Activated CD4-positive, alpha-beta memory T cell treated with anti-CD3 and anti-CD28 coated beads, Interleukin-2, amount 10 ng/mL, durations not matched to agents 7 days and 5 days (primary cell): ENCODE measurements at regions of chr17 and their contacts with region 1.

Region 1: GRCh38 chr17:63919311-63919723 is 678 bp upstream of the GH1 start:
- DNase-seq: peak; percentile 79
- H3K4me3 Mint-ChIP-seq: no peak overlapping the region
- H3K27ac Mint-ChIP-seq: no peak overlapping the region
- H3K4me1 Mint-ChIP-seq: peaks cover 8% of the 10 kb centered on the region
- H3K27me3 Mint-ChIP-seq: peaks cover 19% of the 10 kb centered on the region

Region 2: DNA sequence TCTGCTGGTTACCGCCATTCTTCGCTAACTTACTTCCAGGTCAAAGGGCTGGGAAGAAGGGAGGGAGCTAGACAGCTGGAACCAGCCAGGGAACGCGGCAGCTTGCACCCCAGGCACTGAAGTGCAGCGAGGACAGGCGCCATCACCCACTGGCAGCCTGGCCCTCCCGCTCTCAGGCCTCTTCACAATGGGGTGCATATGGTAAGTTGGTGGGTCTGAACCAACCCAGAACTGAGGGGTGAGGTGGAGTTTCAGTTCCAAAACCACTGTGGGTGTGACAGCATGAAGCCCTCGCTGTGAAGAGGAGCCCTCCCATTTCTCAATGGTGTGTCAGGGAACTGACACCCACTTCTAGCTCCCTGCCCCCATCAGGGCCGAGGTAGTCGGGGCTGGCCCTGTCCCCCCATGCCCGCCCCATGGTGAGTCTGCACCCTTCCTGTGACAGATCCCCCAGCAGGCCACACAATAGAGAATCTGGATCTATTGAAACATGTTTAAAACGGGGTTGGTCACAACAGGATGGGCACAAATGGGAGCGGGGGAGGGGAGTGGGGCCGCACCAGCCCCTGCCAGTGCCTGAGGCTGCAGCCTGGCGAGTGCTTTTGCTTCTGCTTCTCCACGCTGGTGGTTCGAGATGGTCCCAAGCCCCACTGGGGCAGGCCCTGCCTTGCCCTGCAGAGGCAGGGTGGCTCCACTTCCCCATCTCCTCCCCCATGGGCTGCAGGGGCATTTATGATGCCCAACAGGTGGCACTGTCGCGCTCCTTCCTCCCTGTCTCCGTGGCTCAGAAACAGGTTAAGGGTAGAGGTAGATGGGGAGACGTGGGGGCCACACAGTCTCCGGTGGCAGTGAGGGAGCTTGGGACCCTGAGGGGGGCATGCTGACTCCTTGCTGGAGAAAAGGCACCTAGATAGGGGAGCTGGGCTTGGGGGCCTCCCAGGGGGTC is 221.7 kb before region 1 on chr17:
- CTCF ChIA-PET with region 1: no interaction called
- POLR2A ChIA-PET with region 1: no interaction called
- DNase-seq: peak; percentile 89
- H3K4me3 Mint-ChIP-seq: peak overlapping the region; percentile 96
- H3K27ac Mint-ChIP-seq: peak overlapping the region; percentile 96
- H3K4me1 Mint-ChIP-seq: peaks cover 48% of the 10 kb centered on the region
- H3K27me3 Mint-ChIP-seq: no peaks in the 10 kb centered on the region

Region 3: GRCh38 chr17:63931099-63931561 is 11.8 kb after region 1 on chr17:
- CTCF ChIA-PET with region 1: interaction called, 25 read pairs
- POLR2A ChIA-PET with region 1: interaction called, 8 read pairs
- DNase-seq: peak; percentile 79
- H3K4me3 Mint-ChIP-seq: peak overlapping the region; percentile 96
- H3K27ac Mint-ChIP-seq: peak overlapping the region; percentile 90
- H3K4me1 Mint-ChIP-seq: peaks cover 31% of the 10 kb centered on the region
- H3K27me3 Mint-ChIP-seq: peaks cover 4% of the 10 kb centered on the region

Region 4: DNA sequence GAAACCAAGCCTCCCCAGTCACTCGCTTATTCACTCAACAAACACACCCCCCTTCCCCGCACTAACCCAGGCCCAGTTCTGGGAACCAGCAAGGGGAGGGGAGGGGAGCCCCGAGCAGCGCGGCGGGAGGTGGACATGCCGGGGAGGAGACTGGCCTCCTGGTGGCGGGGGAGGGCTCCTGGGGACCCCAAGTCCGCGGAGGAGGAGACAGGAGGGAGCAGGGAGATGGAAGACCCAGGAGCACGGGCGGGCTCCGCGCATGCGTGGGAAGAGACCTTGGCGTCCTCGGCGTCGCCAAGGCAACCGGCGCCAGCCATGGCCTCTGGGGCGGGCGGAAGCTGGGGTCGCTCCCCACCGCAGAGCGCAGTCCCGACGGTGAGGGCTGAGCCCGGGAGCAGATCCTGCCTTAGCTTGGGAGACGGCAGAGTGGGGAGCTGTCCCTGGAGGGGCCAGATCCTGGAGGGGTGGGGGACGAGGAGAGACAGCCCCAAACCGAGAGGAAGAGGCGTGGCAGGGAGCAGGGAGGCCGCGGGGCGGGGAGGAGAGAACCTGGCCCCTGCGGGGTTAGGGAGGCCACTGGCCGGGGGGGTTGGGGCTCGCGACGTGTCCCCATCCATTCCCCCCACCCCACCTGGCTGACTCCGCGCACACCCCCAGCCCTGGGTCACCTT is 78.9 kb after region 1 on chr17 and contains the start of gene PRR29:
- CTCF ChIA-PET with region 1: interaction called, 18 read pairs
- POLR2A ChIA-PET with region 1: interaction called, 4 read pairs
- DNase-seq: peak; percentile 82
- H3K4me3 Mint-ChIP-seq: peak within 1 kb of the TSS; percentile 92
- H3K27ac Mint-ChIP-seq: peak within 1 kb of the TSS; percentile 76
- H3K4me1 Mint-ChIP-seq: peaks cover 66% of the 10 kb centered on the region
- H3K27me3 Mint-ChIP-seq: peaks cover 8% of the 10 kb centered on the region
- total RNA-seq, gene PRR29: 12.0 to 15.1 TPM